HCT116 (cell line): ENCODE measurements at regions of chr12 and their contacts with region 1.

Region 1: DNA sequence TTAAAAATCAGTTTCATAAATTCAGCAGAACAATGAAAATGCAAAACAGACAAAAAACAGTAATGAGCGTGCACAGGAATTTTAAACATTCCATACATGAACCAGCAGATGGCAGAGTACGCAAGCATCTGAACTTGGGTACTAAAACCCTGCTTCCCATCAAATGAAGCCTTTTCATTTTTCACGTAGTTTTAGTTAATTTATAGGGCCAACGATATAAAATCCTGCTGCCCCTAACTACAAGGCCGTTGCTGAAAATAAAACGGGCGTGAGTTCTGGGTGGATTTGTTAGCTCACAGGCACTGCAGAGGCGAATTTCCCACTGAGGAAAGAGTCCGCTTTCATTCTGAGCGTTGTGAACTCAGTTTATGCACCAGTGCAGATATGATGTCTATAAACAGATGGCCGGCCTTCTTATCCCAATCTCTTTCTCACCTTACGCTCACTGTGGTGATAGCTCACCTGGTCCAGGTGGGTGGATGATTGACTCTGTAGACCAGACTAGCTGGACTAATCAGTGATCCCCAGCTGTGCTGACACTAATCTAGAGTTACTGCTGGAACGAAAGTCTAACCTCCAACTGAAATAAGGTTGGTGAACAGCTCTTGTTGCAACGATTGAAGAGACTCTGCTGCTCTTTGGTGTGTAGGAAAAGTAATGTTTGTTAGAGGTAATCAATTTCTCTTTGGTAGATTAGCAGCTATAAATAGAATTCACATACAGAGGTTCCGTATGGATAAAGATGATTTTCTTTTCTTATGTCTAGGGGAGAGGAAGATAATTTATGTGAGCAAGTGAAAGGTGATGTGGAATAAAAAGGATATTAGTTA is 89.2 kb downstream of the PDZRN4 start:
- DNase-seq: peak; percentile 19
- ATAC-seq: peak; percentile 55
- H3K4me3 ChIP-seq: no peak overlapping the region
- H3K27ac ChIP-seq: no peak overlapping the region
- H3K4me1 ChIP-seq: no peaks in the 10 kb centered on the region
- H3K27me3 ChIP-seq: no peaks in the 10 kb centered on the region
- CTCF ChIP-seq: peak; percentile 54 to 72 (median 57); a peak in 5 of 6 replicates
- POLR2A ChIP-seq: no peak
- RAD21 ChIP-seq: peak; percentile 86

Region 2: GRCh38 chr12:41011939-41012338 is 265.4 kb before region 1 on chr12:
- CTCF ChIA-PET with region 1: no interaction called
- POLR2A ChIA-PET with region 1: no interaction called
- RAD21 ChIA-PET with region 1: no interaction called
- intact Hi-C with region 1: no loop called
- DNase-seq: no peak
- ATAC-seq: no peak
- H3K4me3 ChIP-seq: no peak overlapping the region
- H3K27ac ChIP-seq: no peak overlapping the region
- H3K4me1 ChIP-seq: no peaks in the 10 kb centered on the region
- H3K27me3 ChIP-seq: no peaks in the 10 kb centered on the region
- CTCF ChIP-seq: peak in 2 of 3 experiments; percentile 26 to 41; a peak in 3 of 6 replicates
- POLR2A ChIP-seq: no peak
- RAD21 ChIP-seq: peak; percentile 30

Region 3: GRCh38 chr12:41795910-41796309 is 518.6 kb after region 1 on chr12:
- CTCF ChIA-PET with region 1: interaction called, 3 read pairs
- POLR2A ChIA-PET with region 1: no interaction called
- RAD21 ChIA-PET with region 1: no interaction called
- intact Hi-C with region 1: loop called (anchors 10 kb)
- DNase-seq: peak; percentile 4
- ATAC-seq: peak; percentile 83
- H3K4me3 ChIP-seq: no peak overlapping the region
- H3K27ac ChIP-seq: no peak overlapping the region
- H3K4me1 ChIP-seq: no peaks in the 10 kb centered on the region
- H3K27me3 ChIP-seq: no peaks in the 10 kb centered on the region
- CTCF ChIP-seq: peak; percentile 15 to 44 (median 39); a peak in 4 of 6 replicates
- POLR2A ChIP-seq: no peak
- RAD21 ChIP-seq: no peak; the same call in 1 of the 2 replicates

Region 4: DNA sequence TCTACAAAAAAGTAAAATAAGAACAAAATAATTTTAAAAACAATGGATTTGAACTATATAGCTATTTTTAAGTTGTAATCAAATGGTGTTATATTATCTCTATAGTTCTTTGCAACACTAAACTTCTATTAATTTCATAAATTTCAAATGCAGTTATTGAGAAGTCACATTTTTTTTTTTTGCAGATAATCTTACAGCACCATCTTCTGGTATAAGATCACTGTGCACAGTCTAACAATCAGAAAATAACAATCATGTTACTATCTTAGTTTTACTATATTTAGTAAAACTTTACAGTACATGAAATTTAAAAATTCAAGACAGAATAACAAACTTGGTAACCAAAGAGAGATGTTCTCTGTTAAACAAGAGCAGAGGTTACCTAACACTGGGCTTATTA is 826.8 kb after region 1 on chr12:
- CTCF ChIA-PET with region 1: no interaction called
- POLR2A ChIA-PET with region 1: no interaction called
- RAD21 ChIA-PET with region 1: no interaction called
- intact Hi-C with region 1: loop called (anchors 5 kb)
- DNase-seq: no peak
- ATAC-seq: no peak
- H3K4me3 ChIP-seq: no peak overlapping the region
- H3K27ac ChIP-seq: no peak overlapping the region
- H3K4me1 ChIP-seq: peaks cover 0 to 7% of the 10 kb centered on the region in 2 experiments; a peak in 2 of 4 replicates
- H3K27me3 ChIP-seq: no peaks in the 10 kb centered on the region
- CTCF ChIP-seq: peak in 2 of 3 experiments; percentile 22 to 42; a peak in 4 of 6 replicates
- POLR2A ChIP-seq: no peak
- RAD21 ChIP-seq: peak; percentile 48

Region 5: DNA sequence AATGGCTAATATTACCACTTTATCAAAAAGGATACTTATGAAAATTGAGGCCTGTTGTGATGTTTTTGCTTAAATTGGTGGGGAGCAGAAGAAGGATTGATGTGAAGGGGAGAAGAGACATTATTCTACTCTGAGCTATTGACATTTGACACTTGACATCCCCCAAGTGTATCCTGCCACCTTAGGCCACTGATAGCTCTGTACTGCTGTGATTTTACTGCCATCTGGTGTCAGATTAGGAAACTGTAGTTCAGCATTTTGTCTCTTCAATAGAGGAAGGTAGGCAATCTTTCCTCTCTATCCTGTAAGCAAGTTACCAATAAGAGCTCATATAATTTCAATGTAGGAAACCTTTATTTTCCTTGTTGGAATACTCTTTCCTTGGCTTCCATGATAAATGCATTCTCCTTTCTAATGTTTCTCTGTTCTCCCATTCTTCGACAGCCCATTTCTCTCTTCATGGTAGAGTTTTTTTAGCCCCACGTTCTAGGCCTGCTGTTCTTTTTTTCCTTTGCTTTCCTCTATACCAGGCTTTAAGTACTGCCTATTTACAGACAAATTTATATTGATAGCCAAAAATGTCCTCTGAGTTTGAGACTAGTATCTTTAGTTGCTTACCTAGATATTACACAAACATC is 1094.9 kb after region 1 on chr12:
- CTCF ChIA-PET with region 1: interaction called, 3 read pairs
- POLR2A ChIA-PET with region 1: no interaction called
- RAD21 ChIA-PET with region 1: no interaction called
- intact Hi-C with region 1: loop called (anchors 10 kb)
- DNase-seq: peak; percentile 42
- ATAC-seq: peak; percentile 93
- H3K4me3 ChIP-seq: no peak overlapping the region
- H3K27ac ChIP-seq: no peak overlapping the region
- H3K4me1 ChIP-seq: no peaks in the 10 kb centered on the region
- H3K27me3 ChIP-seq: no peaks in the 10 kb centered on the region
- CTCF ChIP-seq: peak; percentile 65 to 75 (median 74)
- POLR2A ChIP-seq: no peak
- RAD21 ChIP-seq: peak; percentile 81